ENCODE measurements at regions of chr4 and their contacts with region 1.

Region 1: GRCh38 chr4:163048447-163048846 is 118.2 kb downstream of the NAF1 start:
- DNase-seq: peak; percentile 32
- CTCF ChIP-seq: peak; percentile 49

Region 2: DNA sequence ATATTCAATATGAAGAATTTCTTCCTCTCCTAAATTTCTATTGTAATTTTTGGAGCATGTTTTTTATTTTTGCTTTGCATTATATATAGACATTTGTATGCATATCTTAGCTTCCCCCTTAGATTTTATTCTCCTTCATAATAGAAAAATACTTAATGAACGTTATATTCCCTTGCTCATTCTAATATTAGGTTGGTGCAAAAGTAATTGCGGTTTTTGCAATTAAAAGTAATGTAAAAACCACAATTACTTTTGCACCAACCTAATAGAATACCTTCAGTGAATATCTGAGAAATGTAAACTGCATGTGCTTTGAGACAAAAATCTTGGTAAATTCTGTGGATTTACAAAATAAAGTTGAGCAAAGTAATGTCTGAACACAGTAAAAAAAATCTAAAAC is 306.0 kb before region 1 on chr4:
- CTCF ChIA-PET with region 1: no interaction called
- POLR2A ChIA-PET with region 1: no interaction called
- DNase-seq: no peak
- CTCF ChIP-seq: no peak

Region 3: GRCh38 chr4:163332500-163333406 is 284.3 kb after region 1 on chr4 and contains the start of gene NPY1R:
- CTCF ChIA-PET with region 1: interaction called, 16 read pairs
- POLR2A ChIA-PET with region 1: no interaction called
- DNase-seq: peak; percentile 60
- CTCF ChIP-seq: peak; percentile 52

Measured in GM10248 (cell line).